ENCODE measurements at regions of chr13 and their contacts with region 1.

Region 1: GRCh38 chr13:45257638-45258338 is 56.9 kb upstream of the KCTD4 start:
- DNase-seq: peak; percentile 45
- CTCF ChIP-seq: no peak

Region 2: DNA sequence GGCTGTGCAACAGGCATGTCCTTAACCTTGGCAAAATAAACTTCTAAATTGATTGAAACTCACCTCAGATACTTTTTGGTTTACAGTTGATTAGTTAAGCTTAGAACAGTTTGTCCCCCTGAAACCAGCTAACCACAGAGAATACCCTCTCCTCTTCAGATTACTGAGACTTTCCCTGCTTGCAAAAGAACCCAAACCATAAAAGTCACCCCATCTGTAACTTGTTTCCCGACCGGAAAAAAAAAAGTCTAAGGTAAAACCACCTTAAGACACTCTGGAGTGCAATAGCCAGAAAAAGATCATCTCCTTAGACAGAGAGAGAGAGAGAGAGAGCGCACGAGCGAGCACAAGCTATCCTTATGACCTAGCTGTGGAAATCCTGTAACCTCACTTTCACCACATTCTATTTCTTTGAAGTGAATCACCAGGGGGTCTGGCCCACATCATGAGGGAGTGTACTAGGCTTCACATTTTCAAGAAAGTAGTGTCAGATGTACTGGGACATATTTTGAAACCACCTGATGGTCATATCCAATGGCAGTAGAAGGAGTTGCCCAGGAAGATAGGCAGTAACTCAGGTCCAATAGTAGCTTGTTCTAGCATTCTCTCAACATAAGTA is 148.6 kb before region 1 on chr13:
- CTCF ChIA-PET with region 1: no interaction called
- POLR2A ChIA-PET with region 1: no interaction called
- DNase-seq: peak; percentile 52
- CTCF ChIP-seq: no peak

Region 3: GRCh38 chr13:45269204-45269603 is 11.4 kb after region 1 on chr13:
- CTCF ChIA-PET with region 1: interaction called, 11 read pairs
- POLR2A ChIA-PET with region 1: no interaction called
- DNase-seq: no peak
- CTCF ChIP-seq: no peak

Measured in GM10248 (cell line).